Breast epithelium (tissue), 4 donors: ENCODE measurements at regions of chr14 and their contacts with region 1.

Region 1: DNA sequence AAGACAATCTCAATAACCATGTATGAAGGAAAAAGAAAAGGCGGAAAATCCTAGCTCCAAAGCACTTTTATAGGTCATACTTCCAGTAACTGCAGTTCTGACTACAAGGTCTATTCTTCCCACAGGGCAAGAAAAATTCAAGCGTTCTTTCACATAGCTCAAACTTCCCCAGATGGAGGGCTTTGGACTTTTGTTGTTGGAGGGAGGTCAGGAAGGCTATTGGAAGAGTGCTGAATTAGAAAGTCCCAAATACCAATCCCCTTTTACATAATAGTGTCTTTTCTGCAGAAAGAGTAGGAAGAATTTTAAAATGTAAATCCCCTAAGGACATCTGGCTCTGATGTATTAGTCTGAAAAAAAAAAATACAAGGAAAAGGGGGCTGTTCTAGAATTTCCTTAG is 309.4 kb downstream of the MDGA2 start:
- DNase-seq: no peak
- H3K4me3 ChIP-seq: no peak overlapping the region
- H3K27ac ChIP-seq: peak overlapping the region in 1 of 2 donors; percentile 7
- H3K4me1 ChIP-seq: no peaks in the 10 kb centered on the region
- H3K27me3 ChIP-seq: no peaks in the 10 kb centered on the region
- CTCF ChIP-seq: no peak
- POLR2A ChIP-seq: no peak

Region 2: GRCh38 chr14:47422191-47422590 is 56.2 kb after region 1 on chr14:
- intact Hi-C with region 1: loop called (anchors 2 kb)
- DNase-seq: no peak
- H3K4me3 ChIP-seq: no peak overlapping the region
- H3K27ac ChIP-seq: no peak overlapping the region
- H3K4me1 ChIP-seq: no peaks in the 10 kb centered on the region
- H3K27me3 ChIP-seq: no peaks in the 10 kb centered on the region
- CTCF ChIP-seq: no peak
- POLR2A ChIP-seq: no peak

Region 3: GRCh38 chr14:47619391-47619790 is 253.4 kb after region 1 on chr14:
- intact Hi-C with region 1: no loop called
- DNase-seq: no peak
- H3K4me3 ChIP-seq: no peak overlapping the region
- H3K27ac ChIP-seq: no peak overlapping the region
- H3K4me1 ChIP-seq: no peaks in the 10 kb centered on the region
- H3K27me3 ChIP-seq: no peaks in the 10 kb centered on the region
- CTCF ChIP-seq: no peak
- POLR2A ChIP-seq: no peak